GM10248 (cell line): ENCODE measurements at regions of chr2 and their contacts with region 1.

Region 1: DNA sequence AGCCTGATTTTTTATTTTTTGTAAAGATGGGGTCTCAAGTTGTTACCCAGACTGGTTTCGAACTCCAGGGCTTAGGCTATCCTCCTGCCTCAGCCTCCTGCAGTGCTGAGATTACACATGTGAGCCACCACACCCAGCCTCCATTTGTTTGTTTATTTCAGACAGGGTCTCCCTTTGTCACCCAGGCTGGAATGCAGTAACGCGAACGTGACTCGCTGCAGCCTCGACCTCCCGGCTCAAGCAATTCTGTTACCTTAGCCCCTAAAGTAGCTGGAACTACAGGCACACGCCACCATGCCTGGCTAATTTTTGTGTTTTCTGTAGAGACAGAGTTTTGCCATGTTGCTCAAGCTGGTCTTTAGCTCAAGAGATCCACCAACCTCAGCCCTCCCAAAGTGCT is 27.2 kb downstream of the UBXN4 start:
- DNase-seq: no peak
- CTCF ChIP-seq: no peak

Region 2: DNA sequence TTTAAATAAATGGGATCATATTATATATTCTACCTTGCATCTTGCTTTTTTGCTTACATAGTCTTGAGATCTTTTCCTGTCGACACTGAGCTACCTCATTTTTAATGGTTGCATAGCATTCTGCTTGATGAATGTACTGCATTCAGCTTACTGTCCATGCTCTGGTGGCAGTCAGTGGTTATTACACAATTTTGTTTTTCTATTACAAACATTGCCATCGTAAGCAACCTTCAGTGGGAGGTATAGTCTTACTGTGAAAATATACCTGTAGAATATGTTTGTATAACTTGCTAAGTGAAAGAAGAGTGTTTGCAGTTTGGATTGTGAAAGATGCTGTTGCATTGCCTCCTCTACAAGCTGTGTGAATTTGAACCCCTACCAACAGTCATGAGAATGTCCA is 16.2 kb after region 1 on chr2:
- CTCF ChIA-PET with region 1: interaction called, 12 read pairs
- POLR2A ChIA-PET with region 1: interaction called, 5 read pairs
- DNase-seq: no peak
- CTCF ChIP-seq: no peak